ENCODE measurements at regions of chr12 and their contacts with region 1.

Region 1: GRCh38 chr12:56299853-56300643 is at the start of gene CS:
- DNase-seq: peak; percentile 98 to 100
- H3K4me3 ChIP-seq: peak within 1 kb of the TSS; percentile 82 to 93
- H3K27ac ChIP-seq: peak within 1 kb of the TSS; percentile 91 to 96
- H3K4me1 ChIP-seq: peaks cover 9 to 25% of the 10 kb centered on the region in 2 donors
- H3K27me3 ChIP-seq: no peaks in the 10 kb centered on the region
- CTCF ChIP-seq: no peak
- total RNA-seq, gene CS: 55.2 TPM

Region 2: GRCh38 chr12:56224102-56224701 is 75.8 kb before region 1 on chr12 and contains the start of gene NABP2:
- intact Hi-C with region 1: loop called (anchors 1 kb)
- DNase-seq: peak; percentile 93 to 99
- H3K4me3 ChIP-seq: peak within 1 kb of the TSS; percentile 69 to 78
- H3K27ac ChIP-seq: peak within 1 kb of the TSS; percentile 98 to 100
- H3K4me1 ChIP-seq: peaks cover 16 to 36% of the 10 kb centered on the region in 2 donors
- H3K27me3 ChIP-seq: no peaks in the 10 kb centered on the region
- CTCF ChIP-seq: peak; percentile 82 to 96 (median 87)
- total RNA-seq, gene NABP2: 2.8 TPM

Region 3: DNA sequence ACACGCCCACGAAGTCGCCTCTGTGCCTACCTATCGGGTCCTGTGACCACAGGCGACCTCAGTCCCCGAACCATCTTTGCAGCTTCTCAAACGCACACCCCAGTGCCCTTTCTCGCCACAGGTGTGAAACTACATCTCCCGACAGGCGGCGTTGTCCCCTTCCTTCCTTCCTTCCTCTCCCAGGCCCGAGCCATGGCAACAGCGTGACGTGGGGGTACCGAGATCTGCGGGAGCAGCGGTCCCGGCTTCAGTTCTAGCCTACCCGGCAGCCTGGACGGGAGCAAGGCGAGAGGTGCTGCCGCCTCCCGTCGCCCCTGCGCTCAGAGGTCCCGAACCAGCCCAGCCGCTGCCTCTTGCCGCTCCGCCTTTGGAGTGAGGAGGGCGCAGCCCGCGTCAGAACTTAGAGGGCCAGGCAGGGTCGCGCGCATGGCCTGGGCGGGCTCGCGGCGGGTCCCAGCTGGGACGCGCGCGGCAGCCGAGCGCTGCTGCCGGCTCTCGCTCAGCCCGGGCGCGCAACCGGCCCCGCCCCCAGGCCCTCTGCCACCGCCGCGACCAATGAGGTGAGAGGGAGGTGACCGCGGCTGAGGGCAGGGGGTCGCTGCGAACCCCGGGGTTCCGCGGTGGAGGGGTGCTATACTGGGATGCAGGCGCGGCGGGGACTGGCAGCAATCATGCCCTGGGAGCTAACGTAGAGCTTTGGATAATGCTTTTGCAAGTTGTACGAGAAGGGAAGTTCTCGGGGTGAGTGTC is 33.2 kb before region 1 on chr12 and contains the start of gene COQ10A:
- intact Hi-C with region 1: loop called (anchors 2 kb)
- DNase-seq: peak; percentile 79 to 94
- H3K4me3 ChIP-seq: peak within 1 kb of the TSS; percentile 69 to 73
- H3K27ac ChIP-seq: peak within 1 kb of the TSS; percentile 91 to 96
- H3K4me1 ChIP-seq: peaks cover 0 to 12% of the 10 kb centered on the region in 2 donors
- H3K27me3 ChIP-seq: no peaks in the 10 kb centered on the region
- CTCF ChIP-seq: peak; percentile 65 to 72 (median 71)
- total RNA-seq, gene COQ10A: 4.8 TPM

Region 4: DNA sequence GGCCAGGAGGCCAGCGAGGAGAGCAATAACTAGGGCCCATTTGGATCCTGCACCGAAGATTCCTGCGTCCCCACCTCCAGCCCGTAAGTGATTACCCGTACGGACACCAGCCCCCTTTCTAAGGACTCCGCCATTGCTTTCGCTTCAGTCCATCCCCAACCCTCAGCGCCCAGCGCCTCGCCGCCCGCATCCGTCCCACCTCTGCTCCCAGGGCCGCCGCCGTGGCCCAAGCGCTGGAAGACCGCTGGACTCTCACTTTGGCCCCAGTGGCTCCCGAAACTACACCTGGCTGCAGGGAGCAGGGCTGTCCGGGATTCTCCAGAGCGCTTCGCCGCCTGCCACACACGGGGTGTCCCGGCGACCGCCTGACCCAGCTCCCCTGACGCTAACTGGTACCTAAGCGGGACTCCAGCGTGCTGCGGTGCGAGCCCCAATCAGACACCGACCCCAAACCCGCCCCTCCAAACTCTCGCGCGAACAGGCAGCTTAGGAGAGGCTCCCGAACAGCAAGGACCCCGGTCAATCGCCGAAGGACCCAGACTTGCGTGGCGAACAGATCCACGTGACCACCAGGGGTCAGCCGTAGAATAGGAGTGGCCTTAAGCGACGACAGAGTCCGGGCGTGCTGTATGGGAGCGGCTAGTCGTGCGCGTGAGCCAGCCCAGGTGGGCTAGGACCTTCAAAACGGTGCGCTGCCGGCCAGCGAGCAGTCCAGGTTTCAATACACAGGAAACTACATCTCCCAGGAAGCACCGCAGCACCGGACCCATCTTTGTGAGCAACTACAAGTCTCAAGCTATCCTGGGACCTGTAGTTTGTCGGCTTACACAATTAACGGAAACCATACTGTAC is 15.8 kb after region 1 on chr12 and contains the start of gene CNPY2:
- intact Hi-C with region 1: loop called (anchors 1 kb)
- DNase-seq: peak; percentile 90 to 98
- H3K4me3 ChIP-seq: peak within 1 kb of the TSS; percentile 74 to 79
- H3K27ac ChIP-seq: peak within 1 kb of the TSS; percentile 80 to 91
- H3K4me1 ChIP-seq: peaks cover 7 to 10% of the 10 kb centered on the region in 2 donors
- H3K27me3 ChIP-seq: no peaks in the 10 kb centered on the region
- CTCF ChIP-seq: peak in 2 of 3 experiments; percentile 6 to 16
- total RNA-seq, gene CNPY2: 34.6 TPM

Region 5: DNA sequence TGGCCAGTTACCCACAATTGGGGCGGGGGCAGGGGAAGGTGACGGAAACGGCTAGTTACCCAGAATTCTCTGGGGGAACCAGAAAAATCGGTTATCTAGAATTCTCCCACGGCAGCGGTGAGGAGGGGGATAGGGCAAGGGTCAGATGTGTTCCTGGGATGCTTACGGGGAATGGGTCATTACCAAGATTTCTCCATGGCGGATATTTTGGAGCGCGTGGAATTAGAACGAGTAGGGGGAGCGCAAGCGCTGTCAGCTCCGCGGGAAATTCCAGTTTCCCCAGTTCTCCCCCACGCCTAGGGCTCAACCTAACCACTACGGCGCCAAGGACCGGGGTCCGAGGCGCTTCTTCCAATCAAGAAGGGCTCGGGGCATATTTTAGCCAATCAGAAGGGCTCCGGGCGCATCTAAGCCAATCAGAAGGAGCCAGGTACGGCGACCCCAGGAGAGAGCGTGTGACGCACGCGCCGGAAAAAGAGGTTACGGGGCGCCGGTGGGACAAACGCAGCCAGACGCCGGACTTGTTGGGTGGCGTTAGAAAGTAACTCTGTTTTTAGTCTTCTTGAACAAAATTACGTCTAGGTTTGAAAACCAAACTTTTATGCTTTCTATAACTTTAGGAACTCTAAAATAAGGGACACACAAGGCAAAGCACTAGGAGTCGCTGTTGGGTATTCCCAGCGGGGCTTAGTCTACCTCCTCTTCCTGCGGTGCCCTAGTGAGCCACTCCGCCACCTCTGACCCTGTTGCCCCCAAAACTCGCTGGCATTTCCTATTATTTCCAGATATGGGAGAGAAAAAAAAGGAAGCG is 33.8 kb after region 1 on chr12 and contains the start of gene PAN2:
- intact Hi-C with region 1: loop called (anchors 2 kb)
- DNase-seq: peak; percentile 91 to 98
- H3K4me3 ChIP-seq: peak within 1 kb of the TSS; percentile 62 to 67
- H3K27ac ChIP-seq: peak within 1 kb of the TSS; percentile 94 to 99
- H3K4me1 ChIP-seq: peaks cover 3 to 6% of the 10 kb centered on the region in 2 donors
- H3K27me3 ChIP-seq: no peaks in the 10 kb centered on the region
- CTCF ChIP-seq: peak; percentile 43 to 63 (median 55)
- total RNA-seq, gene PAN2: 45.3 TPM